ENCODE measurements at regions of chr6 and their contacts with region 1.

Region 1: DNA sequence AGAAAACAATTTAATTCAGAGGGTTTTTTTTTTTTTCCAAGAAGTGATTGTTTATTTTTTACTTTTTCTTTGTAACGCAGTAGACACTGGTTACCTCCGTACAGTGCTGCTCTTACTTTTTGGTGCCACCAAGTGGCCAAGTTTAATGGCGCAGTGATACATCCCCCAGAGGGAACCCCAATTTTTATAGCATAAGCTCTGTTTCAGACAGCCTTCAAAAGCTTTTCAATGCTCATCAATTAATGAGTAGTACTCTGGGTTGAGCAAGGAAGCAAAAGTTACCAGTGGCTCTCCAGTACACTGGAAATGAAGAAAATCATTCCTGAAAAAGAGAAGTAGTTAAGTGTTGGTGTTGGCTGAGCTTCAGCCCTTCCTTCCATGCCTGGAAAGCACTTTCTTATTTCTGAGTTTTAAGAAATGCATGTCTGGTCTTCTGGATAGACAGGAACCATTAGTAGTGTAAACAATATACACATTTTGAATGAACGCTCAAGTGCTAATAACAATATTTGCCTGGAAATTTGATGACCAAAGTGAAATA is 129.1 kb upstream of the SMLR1 start:
- DNase-seq: peak; percentile 63
- H3K4me3 ChIP-seq: no peak overlapping the region
- H3K27ac ChIP-seq: no peak overlapping the region
- H3K4me1 ChIP-seq: peaks cover 8% of the 10 kb centered on the region
- H3K27me3 ChIP-seq: peaks cover 0 to 4% of the 10 kb centered on the region in 2 experiments
- CTCF ChIP-seq: peak; percentile 69 to 78
- POLR2A ChIP-seq: no peak

Region 2: DNA sequence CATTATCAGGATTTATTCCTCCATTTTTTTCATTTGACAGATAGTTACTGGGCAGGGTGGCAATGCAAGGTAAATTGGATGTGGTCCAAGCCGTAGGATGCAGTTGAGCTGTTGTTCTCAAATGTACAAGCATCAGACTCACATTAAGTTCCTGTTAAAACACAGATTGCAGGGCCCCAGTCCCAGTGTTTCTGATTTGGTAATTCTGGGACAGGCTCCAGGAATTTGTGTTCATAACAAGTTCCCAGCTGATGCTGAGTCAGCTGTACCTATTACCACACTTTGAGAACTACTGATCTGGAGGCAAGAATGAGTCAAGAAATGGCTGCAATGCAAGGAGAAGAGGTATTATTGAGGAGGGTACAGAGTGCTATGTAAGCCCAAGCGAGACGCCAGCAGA is 848.6 kb before region 1 on chr6:
- CTCF ChIA-PET with region 1: no interaction called
- POLR2A ChIA-PET with region 1: no interaction called
- dilution Hi-C with region 1: no loop called
- intact Hi-C with region 1: no loop called
- DNase-seq: peak; percentile 46
- H3K4me3 ChIP-seq: no peak overlapping the region
- H3K27ac ChIP-seq: no peak overlapping the region
- H3K4me1 ChIP-seq: peaks cover 26% of the 10 kb centered on the region
- H3K27me3 ChIP-seq: no peaks in the 10 kb centered on the region
- CTCF ChIP-seq: no peak
- POLR2A ChIP-seq: no peak

Region 3: DNA sequence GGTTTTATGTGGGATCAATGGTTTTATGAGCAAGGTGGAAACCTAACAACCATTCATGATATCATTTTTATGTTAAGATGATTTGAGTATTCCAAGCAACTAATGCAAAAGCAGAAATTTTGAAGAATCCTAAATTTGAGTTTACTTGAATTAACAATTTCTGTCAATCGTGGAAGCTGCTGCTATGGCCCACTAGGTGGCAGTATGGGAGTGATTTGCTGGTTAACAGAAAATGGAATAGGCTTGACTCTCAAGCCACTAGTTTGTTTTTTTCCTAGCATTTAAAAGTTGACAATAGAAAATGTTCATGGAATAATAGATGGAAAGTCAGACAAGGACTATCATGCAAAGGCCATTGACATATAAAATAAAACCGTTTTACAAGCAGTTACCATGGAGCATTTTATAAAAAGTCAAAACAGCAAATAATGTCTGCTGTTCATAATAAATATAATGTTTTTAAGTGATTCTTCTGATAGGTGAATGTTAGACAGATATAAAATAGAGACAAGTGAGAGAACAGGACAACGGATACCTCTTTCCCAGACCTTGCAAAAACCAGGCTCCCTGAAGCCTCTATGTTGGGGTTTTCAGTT is 375.3 kb before region 1 on chr6:
- CTCF ChIA-PET with region 1: interaction called, 221 read pairs
- POLR2A ChIA-PET with region 1: no interaction called
- dilution Hi-C with region 1: no loop called
- intact Hi-C with region 1: loop called (anchors 1 kb)
- DNase-seq: peak; percentile 53
- H3K4me3 ChIP-seq: no peak overlapping the region
- H3K27ac ChIP-seq: no peak overlapping the region
- H3K4me1 ChIP-seq: no peaks in the 10 kb centered on the region
- H3K27me3 ChIP-seq: peaks cover 0 to 9% of the 10 kb centered on the region in 2 experiments
- CTCF ChIP-seq: peak; percentile 74
- POLR2A ChIP-seq: no peak

Region 4: DNA sequence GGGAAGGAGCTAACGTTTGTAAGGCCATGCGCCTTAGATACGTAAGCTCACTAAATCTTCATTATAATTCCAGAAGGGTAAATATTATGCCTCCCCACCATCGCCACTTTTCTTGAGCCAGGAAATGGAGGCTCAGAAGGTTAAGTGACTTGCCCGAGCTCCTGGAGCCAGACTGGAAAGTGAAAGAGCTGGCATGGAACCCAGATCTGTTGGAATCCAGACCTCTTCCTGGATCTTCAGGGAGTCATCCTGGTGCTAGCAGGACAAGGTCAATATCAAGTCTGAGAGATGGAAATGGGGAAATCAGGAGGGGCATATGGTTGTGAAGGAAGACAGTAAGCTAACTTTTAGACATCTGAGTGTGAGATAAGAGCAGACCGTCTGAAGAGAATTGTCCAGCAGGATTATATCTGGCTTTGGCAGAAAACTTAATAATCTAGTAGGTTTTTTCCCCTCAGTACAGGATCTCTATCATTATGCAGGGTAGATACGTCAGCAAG is 326.1 kb before region 1 on chr6:
- CTCF ChIA-PET with region 1: interaction called, 161 read pairs
- POLR2A ChIA-PET with region 1: no interaction called
- dilution Hi-C with region 1: no loop called
- intact Hi-C with region 1: no loop called
- DNase-seq: no peak
- H3K4me3 ChIP-seq: no peak overlapping the region
- H3K27ac ChIP-seq: no peak overlapping the region
- H3K4me1 ChIP-seq: no peaks in the 10 kb centered on the region
- H3K27me3 ChIP-seq: peaks cover 17 to 26% of the 10 kb centered on the region in 2 experiments
- CTCF ChIP-seq: no peak
- POLR2A ChIP-seq: no peak

Region 5: GRCh38 chr6:130602151-130602770 is 95.8 kb before region 1 on chr6:
- CTCF ChIA-PET with region 1: interaction called, 21 read pairs
- POLR2A ChIA-PET with region 1: no interaction called
- dilution Hi-C with region 1: no loop called
- intact Hi-C with region 1: loop called (anchors 1 kb)
- DNase-seq: peak; percentile 98
- H3K4me3 ChIP-seq: no peak overlapping the region
- H3K27ac ChIP-seq: peak overlapping the region; percentile 99
- H3K4me1 ChIP-seq: peaks cover 29% of the 10 kb centered on the region
- H3K27me3 ChIP-seq: no peaks in the 10 kb centered on the region
- CTCF ChIP-seq: no peak
- POLR2A ChIP-seq: peak; percentile 50

Region 6: DNA sequence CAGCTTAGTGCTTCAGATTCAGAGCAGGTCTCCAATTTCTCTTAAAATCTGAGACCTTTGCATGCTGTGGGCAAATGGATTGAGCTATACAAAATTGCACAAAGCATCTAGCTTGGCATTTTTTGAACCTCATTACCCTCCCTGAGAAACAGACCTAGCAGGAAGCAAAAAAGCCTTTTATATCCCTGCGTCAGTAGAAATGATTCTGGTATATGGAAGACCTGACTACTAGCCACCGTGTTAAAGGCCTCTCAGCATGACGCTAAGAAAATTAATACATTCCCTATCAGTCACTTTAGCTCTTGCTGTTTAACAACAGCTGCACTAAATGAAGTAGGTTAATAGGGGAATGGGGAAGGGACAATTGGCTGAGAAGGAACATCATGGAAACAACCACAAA is 18.4 kb after region 1 on chr6:
- CTCF ChIA-PET with region 1: interaction called, 15 read pairs
- POLR2A ChIA-PET with region 1: no interaction called
- dilution Hi-C with region 1: no loop called
- intact Hi-C with region 1: no loop called
- DNase-seq: no peak
- H3K4me3 ChIP-seq: no peak overlapping the region
- H3K27ac ChIP-seq: no peak overlapping the region
- H3K4me1 ChIP-seq: no peaks in the 10 kb centered on the region
- H3K27me3 ChIP-seq: peaks cover 2 to 3% of the 10 kb centered on the region in 2 experiments
- CTCF ChIP-seq: no peak
- POLR2A ChIP-seq: no peak

Region 7: DNA sequence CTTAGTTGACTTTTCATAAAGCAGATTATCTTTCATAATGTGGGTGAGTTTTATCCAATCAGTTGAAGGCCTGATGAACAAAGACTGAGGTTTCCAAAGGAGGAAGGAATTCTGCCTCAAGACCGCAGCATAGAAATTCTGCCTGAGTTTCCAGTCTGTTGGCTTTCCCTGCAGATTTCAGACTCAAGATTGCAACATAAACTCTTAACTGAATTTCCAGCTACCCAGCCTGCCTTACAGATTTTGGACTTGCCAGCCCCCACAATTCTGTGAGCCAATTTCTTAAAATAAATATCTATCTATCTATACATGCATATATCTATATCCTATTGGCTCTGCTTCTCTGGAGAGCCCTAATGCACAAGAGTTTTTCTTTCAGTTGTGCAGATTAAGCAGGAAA is 71.8 kb after region 1 on chr6:
- CTCF ChIA-PET with region 1: no interaction called
- POLR2A ChIA-PET with region 1: no interaction called
- dilution Hi-C with region 1: no loop called
- intact Hi-C with region 1: no loop called
- DNase-seq: no peak
- H3K4me3 ChIP-seq: no peak overlapping the region
- H3K27ac ChIP-seq: no peak overlapping the region
- H3K4me1 ChIP-seq: no peaks in the 10 kb centered on the region
- H3K27me3 ChIP-seq: peaks cover 7 to 9% of the 10 kb centered on the region in 2 experiments
- CTCF ChIP-seq: no peak
- POLR2A ChIP-seq: no peak

Measured in endothelial cell of umbilical vein (primary cell).